Caco-2 (cell line): ENCODE measurements at regions of chr9 and their contacts with region 1.

Region 1: GRCh38 chr9:129495534-129496325 is 125.2 kb downstream of the C9orf50 start:
- DNase-seq: peak; percentile 96 to 98
- H3K4me3 ChIP-seq: peak overlapping the region; percentile 50
- H3K4me3 Mint-ChIP-seq: peak overlapping the region; percentile 75
- H3K27ac Mint-ChIP-seq: peak overlapping the region; percentile 79
- H3K4me1 ChIP-seq: peaks cover 53% of the 10 kb centered on the region
- H3K4me1 Mint-ChIP-seq: peaks cover 49% of the 10 kb centered on the region
- H3K27me3 ChIP-seq: no peaks in the 10 kb centered on the region
- H3K27me3 Mint-ChIP-seq: no peaks in the 10 kb centered on the region
- CTCF ChIP-seq: no peak

Region 2: GRCh38 chr9:129333953-129334724 is 161.6 kb before region 1 on chr9:
- CTCF ChIA-PET with region 1: no interaction called
- POLR2A ChIA-PET with region 1: interaction called, 12 read pairs
- intact Hi-C with region 1: no loop called
- DNase-seq: peak; percentile 97 to 99
- H3K4me3 ChIP-seq: peak overlapping the region; percentile 11
- H3K4me3 Mint-ChIP-seq: peak overlapping the region; percentile 68
- H3K27ac Mint-ChIP-seq: peak overlapping the region; percentile 98
- H3K4me1 ChIP-seq: peaks cover 27% of the 10 kb centered on the region
- H3K4me1 Mint-ChIP-seq: peaks cover 19% of the 10 kb centered on the region
- H3K27me3 ChIP-seq: no peaks in the 10 kb centered on the region
- H3K27me3 Mint-ChIP-seq: no peaks in the 10 kb centered on the region
- CTCF ChIP-seq: peak; percentile 22 to 31

Region 3: GRCh38 chr9:129569502-129570449 is 74.0 kb after region 1 on chr9:
- CTCF ChIA-PET with region 1: interaction called, 4 read pairs
- POLR2A ChIA-PET with region 1: interaction called, 3 read pairs
- intact Hi-C with region 1: loop called (anchors 2 kb)
- DNase-seq: peak; percentile 56 to 65
- H3K4me3 ChIP-seq: peak overlapping the region; percentile 43
- H3K4me3 Mint-ChIP-seq: peak overlapping the region; percentile 75
- H3K27ac Mint-ChIP-seq: peak overlapping the region; percentile 88
- H3K4me1 ChIP-seq: peaks cover 28% of the 10 kb centered on the region
- H3K4me1 Mint-ChIP-seq: peaks cover 27% of the 10 kb centered on the region
- H3K27me3 ChIP-seq: no peaks in the 10 kb centered on the region
- H3K27me3 Mint-ChIP-seq: no peaks in the 10 kb centered on the region
- CTCF ChIP-seq: peak; percentile 35 to 53

Region 4: DNA sequence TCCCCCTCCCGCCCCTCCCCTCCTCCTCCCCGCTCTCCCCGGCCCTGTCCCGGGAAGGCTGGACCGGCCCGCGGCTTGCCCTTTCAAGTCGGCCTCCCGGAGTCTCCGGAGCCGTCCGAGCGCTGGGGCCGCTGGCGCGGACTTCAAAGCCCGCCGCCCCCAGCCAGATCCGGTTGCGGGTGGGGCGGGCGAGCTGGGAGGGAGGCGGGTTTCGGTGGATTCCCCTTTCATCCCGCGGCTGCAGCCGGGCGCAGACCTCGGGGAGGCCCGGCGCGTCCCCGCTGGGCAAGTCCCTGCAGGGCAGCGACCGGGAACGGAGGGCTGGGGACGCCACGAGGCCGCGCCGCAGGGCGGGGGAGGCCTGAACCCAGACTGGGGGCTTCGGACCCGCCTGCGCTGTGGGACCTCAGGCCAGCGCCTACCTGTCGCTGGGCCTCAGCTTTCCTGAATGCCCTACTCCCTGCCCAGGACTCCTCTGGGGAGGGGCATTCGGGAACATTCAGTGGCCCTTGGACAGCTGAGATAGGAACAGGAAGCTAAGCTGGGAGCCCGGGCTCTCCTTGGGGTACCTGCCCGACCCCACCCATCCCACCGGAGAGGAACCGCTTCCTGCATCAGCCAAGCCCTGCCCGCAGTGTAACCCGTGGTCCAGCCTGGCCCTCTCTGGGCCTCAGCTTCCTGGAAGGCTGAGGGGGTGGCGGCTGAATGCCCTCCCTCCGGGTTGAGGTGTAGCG is 101.8 kb after region 1 on chr9:
- CTCF ChIA-PET with region 1: interaction called, 6 read pairs
- POLR2A ChIA-PET with region 1: interaction called, 6 read pairs
- intact Hi-C with region 1: loop called (anchors 5 kb)
- DNase-seq: peak; percentile 93 to 94
- H3K4me3 ChIP-seq: peak overlapping the region; percentile 61
- H3K4me3 Mint-ChIP-seq: peak overlapping the region; percentile 68
- H3K27ac Mint-ChIP-seq: peak overlapping the region; percentile 86
- H3K4me1 ChIP-seq: peaks cover 35% of the 10 kb centered on the region
- H3K4me1 Mint-ChIP-seq: peaks cover 18% of the 10 kb centered on the region
- H3K27me3 ChIP-seq: no peaks in the 10 kb centered on the region
- H3K27me3 Mint-ChIP-seq: no peaks in the 10 kb centered on the region
- CTCF ChIP-seq: no peak

Region 5: GRCh38 chr9:129712634-129713401 is 217.1 kb after region 1 on chr9:
- CTCF ChIA-PET with region 1: no interaction called
- POLR2A ChIA-PET with region 1: no interaction called
- intact Hi-C with region 1: no loop called
- DNase-seq: no peak
- H3K4me3 ChIP-seq: no peak overlapping the region
- H3K4me3 Mint-ChIP-seq: no peak overlapping the region
- H3K27ac Mint-ChIP-seq: no peak overlapping the region
- H3K4me1 ChIP-seq: no peaks in the 10 kb centered on the region
- H3K4me1 Mint-ChIP-seq: no peaks in the 10 kb centered on the region
- H3K27me3 ChIP-seq: no peaks in the 10 kb centered on the region
- H3K27me3 Mint-ChIP-seq: peaks cover 3% of the 10 kb centered on the region
- CTCF ChIP-seq: no peak